Gastrocnemius medialis (tissue), 4 donors: ENCODE measurements at regions of chr17 and their contacts with region 1.

Region 1: DNA sequence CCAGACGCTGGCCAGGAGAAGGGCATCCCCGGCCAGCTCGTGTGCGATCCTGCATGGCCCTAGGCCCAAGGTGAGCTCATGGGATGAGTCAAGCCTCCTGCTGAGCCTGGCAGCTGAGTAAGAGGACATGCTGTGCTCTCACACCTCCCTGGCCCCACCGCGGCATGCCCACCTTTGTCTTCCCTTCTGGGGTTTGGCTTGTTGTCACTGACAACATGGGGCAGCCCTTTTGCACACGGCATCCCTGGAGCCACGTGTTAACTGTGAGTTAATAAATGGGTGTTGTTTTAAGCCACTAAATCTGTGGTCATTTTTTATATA is 8.9 kb upstream of the TNS4 start:
- DNase-seq: peak; percentile 90 to 98
- ATAC-seq: peak; percentile 84 to 92
- H3K4me3 ChIP-seq: no peak overlapping the region
- H3K27ac ChIP-seq: peak overlapping the region; percentile 80 to 94 (median 86)
- H3K4me1 ChIP-seq: peaks cover 27% of the 10 kb centered on the region in 2 donors
- H3K27me3 ChIP-seq: no peaks in the 10 kb centered on the region
- CTCF ChIP-seq: no peak
- POLR2A ChIP-seq: no peak

Region 2: DNA sequence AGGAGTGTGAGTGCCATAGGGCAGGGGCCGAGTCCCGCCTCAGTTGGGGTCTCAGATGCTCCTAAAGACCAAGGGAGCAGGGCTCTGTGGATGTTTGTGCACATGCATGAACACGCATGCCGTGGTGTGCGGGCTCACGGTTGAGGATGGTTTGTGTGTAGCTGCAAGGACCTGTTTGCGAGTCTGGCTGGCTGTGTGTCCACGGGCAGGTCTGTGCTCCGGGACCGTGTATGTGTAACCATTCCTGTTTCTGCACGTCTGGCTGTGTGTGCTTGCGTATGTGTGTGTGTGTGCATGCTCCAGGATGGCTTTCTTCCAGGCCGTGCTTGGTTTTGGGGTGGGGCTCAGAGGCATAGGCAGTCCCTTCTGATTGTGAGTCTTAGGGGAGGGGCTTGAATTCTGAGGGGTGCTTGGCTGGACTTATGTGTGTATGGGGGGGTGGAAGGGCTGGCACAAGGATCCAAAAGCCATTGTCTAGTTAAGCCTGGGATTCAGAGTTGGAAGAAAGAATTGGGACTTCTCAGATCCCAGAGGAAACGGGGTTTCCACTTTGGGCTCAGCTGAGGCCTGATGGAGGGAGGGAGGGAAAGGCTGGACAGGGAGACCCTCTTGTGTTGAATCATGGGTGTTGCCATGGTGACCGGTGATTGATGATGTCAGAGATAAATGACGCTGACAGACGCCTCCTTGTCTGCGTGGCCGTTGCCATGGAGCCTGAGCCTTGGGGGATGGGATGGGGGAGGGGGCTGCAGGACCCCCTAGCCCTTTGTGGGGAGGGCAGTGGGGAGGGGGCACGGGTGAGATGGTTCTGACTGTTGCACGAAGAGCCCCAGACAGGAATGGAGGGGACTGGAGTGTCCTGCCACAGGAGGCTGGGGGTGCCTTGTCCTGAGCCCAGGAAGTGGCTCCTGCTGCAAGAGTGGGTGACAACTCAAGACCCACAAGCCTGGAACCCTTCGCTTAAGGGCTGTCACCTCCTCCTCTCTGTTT is 160.1 kb before region 1 on chr17:
- in situ Hi-C with region 1: no loop called
- intact Hi-C with region 1: loop called (anchors 5 kb)
- DNase-seq: no peak
- ATAC-seq: no peak
- H3K4me3 ChIP-seq: no peak overlapping the region
- H3K27ac ChIP-seq: peak overlapping the region; percentile 95 to 100 (median 98)
- H3K4me1 ChIP-seq: peaks cover 68 to 71% of the 10 kb centered on the region in 2 donors
- H3K27me3 ChIP-seq: no peaks in the 10 kb centered on the region
- CTCF ChIP-seq: no peak
- POLR2A ChIP-seq: no peak

Region 3: GRCh38 chr17:40499551-40500174 is 10.6 kb before region 1 on chr17:
- in situ Hi-C with region 1: no loop called
- intact Hi-C with region 1: loop called (anchors 1 kb)
- DNase-seq: peak; percentile 81 to 93
- ATAC-seq: peak; percentile 94 to 95
- H3K4me3 ChIP-seq: peak overlapping the region; percentile 11 to 20 (median 18)
- H3K27ac ChIP-seq: peak overlapping the region; percentile 55 to 76 (median 63)
- H3K4me1 ChIP-seq: peaks cover 16 to 18% of the 10 kb centered on the region in 2 donors
- H3K27me3 ChIP-seq: no peaks in the 10 kb centered on the region
- CTCF ChIP-seq: peak in 2 of 5 experiments; percentile 10 to 19
- POLR2A ChIP-seq: no peak

Region 4: GRCh38 chr17:40577611-40578065 is 67.3 kb after region 1 on chr17:
- in situ Hi-C with region 1: no loop called
- intact Hi-C with region 1: no loop called
- DNase-seq: no peak
- ATAC-seq: no peak
- H3K4me3 ChIP-seq: no peak overlapping the region
- H3K27ac ChIP-seq: no peak overlapping the region
- H3K4me1 ChIP-seq: no peaks in the 10 kb centered on the region
- H3K27me3 ChIP-seq: no peaks in the 10 kb centered on the region
- CTCF ChIP-seq: no peak
- POLR2A ChIP-seq: no peak